Activated CD8-positive, alpha-beta T cell treated with anti-CD3 and anti-CD28 coated beads for 36 hours (primary cell): ENCODE measurements at regions of chr2 and their contacts with region 1.

Region 1: GRCh38 chr2:219475697-219476651 is 22.7 kb upstream of the GMPPA start:
- DNase-seq: peak; percentile 84
- ATAC-seq: peak; percentile 96
- H3K4me3 Mint-ChIP-seq: no peak overlapping the region
- H3K27ac Mint-ChIP-seq: no peak overlapping the region
- H3K4me1 Mint-ChIP-seq: peaks cover 2% of the 10 kb centered on the region
- H3K27me3 Mint-ChIP-seq: no peaks in the 10 kb centered on the region
- CTCF ChIP-seq: peak; percentile 75

Region 2: GRCh38 chr2:219452838-219453317 is 23.1 kb before region 1 on chr2:
- CTCF ChIA-PET with region 1: interaction called, 14 read pairs
- POLR2A ChIA-PET with region 1: interaction called, 3 read pairs
- intact Hi-C with region 1: no loop called
- DNase-seq: no peak
- ATAC-seq: no peak
- H3K4me3 Mint-ChIP-seq: no peak overlapping the region
- H3K27ac Mint-ChIP-seq: no peak overlapping the region
- H3K4me1 Mint-ChIP-seq: peaks cover 25% of the 10 kb centered on the region
- H3K27me3 Mint-ChIP-seq: peaks cover 8% of the 10 kb centered on the region
- CTCF ChIP-seq: no peak

Region 3: GRCh38 chr2:219459460-219460311 is 16.3 kb before region 1 on chr2:
- CTCF ChIA-PET with region 1: interaction called, 14 read pairs
- POLR2A ChIA-PET with region 1: no interaction called
- intact Hi-C with region 1: no loop called
- DNase-seq: peak; percentile 62
- ATAC-seq: peak; percentile 50
- H3K4me3 Mint-ChIP-seq: no peak overlapping the region
- H3K27ac Mint-ChIP-seq: peak overlapping the region; percentile 25
- H3K4me1 Mint-ChIP-seq: peaks cover 14% of the 10 kb centered on the region
- H3K27me3 Mint-ChIP-seq: no peaks in the 10 kb centered on the region
- CTCF ChIP-seq: peak; percentile 84

Region 4: DNA sequence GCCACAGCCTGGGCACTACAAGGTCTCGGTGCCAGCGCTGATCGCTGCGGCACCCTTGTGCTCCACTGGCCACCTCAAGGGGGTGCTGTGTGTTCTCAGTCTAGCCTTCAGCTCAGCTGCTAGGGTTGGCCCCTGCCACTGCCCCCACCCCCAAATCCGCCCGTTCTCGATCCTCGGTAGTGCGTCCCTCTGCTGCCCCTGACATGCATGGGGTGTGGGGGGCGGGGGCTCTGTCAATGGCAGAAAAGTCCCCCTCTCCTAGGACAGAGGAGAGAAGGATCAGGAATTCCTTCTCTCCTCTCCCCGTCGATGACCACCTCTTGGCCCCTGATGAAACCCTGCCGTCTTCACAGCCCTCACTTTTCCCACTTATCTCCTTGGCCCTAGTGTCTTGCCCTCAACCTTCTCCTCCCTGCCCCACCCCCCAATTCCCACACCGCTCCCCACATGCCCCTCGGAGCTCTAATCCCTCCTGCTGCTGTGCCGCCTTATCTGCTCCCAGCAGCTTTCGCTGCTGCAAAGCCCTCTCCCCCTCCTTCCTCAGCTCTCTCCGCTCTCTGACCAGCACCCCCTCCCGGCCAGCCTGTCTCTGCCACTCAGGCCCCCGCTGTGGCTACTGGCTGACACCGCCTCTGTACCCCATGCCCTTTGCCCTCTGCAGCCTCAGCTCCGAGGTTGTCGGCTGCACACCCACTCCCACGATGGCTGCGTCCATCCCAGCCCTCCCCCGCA is 34.0 kb after region 1 on chr2:
- CTCF ChIA-PET with region 1: interaction called, 13 read pairs
- POLR2A ChIA-PET with region 1: no interaction called
- intact Hi-C with region 1: no loop called
- DNase-seq: peak; percentile 69
- ATAC-seq: peak; percentile 89
- H3K4me3 Mint-ChIP-seq: no peak overlapping the region
- H3K27ac Mint-ChIP-seq: no peak overlapping the region
- H3K4me1 Mint-ChIP-seq: peaks cover 18% of the 10 kb centered on the region
- H3K27me3 Mint-ChIP-seq: peaks cover 44% of the 10 kb centered on the region
- CTCF ChIP-seq: peak; percentile 53